GM10248 (cell line): ENCODE measurements at regions of chr6 and their contacts with region 1.

Region 1: GRCh38 chr6:29976588-29977424 is 34.5 kb downstream of the HLA-A start:
- DNase-seq: peak; percentile 72
- CTCF ChIP-seq: peak; percentile 57

Region 2: DNA sequence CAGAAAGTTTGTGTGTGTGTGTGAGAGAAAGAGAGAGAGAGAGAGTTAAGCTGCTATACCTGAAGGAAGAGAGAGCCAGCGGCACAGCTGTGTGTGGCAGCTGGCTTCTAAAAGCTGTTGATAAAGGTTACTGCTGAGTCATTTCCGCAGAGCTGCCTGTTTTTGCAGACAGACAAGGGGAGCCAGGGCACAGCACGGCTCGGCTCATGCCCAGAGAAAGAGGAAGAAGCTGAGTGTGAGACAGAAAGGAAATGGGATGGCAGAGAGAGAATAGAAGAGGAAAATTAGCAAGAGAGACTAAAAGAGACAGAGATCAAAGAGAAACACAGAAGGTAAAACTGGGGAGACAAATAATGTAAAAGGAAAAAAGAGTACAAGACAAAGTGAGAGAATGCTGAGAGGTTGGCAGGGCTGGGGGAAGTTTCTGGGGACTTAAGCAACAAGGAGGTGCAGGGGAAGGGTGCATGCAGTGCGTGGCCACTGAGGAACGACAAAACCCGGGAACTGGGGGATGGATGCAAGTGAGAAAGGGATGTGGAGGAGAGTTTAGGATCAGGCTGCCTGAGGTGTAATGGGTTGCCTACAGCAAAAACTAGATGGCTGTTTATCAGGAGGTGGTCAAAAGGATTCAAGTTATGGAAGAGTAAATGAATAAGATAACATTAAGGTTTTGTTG is 11.8 kb before region 1 on chr6:
- CTCF ChIA-PET with region 1: interaction called, 25 read pairs
- POLR2A ChIA-PET with region 1: no interaction called
- DNase-seq: peak; percentile 73
- CTCF ChIP-seq: no peak